HAP-1 (cell line): ENCODE measurements at regions of chr7 and their contacts with region 1.

Region 1: DNA sequence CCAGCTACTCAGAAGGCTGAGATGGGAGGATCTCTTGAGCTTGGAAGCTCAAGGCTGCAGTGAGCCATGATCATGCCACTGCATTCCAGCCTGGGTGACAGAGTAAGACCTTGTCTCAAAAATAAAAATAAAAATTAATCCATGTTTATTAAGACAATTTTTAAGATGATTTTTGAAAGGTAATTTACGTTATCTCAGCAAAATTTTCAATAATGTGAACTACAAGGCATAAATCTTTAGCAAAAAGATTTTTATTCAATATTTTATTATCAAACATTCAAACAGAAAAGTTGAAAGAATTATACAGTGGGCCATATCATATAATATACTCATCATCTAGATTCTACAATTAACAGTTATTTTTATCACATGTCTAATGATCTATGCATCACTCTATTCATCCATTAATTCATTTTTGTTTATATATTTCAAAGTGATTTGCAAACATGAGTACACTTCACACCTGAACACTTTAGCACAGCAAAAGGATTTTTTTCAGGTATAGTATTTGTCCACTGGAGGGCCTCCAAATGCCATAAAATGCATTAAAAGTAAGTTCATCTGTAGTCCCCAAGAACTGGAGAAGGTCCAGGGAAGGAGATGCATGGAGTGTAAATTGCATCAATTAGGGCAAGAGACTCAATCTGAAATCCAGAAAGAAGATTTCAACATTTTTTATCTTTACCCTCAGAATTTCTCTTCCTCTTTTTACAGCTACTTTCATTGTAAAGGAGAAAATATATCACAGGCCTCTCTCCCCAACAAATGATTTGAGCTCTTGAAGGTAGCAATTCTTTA is 38.6 kb upstream of the RSBN1L start:
- DNase-seq: peak; percentile 33 to 40
- H3K4me3 ChIP-seq: no peak overlapping the region
- H3K4me1 ChIP-seq: no peaks in the 10 kb centered on the region
- H3K27me3 ChIP-seq: no peaks in the 10 kb centered on the region

Region 2: DNA sequence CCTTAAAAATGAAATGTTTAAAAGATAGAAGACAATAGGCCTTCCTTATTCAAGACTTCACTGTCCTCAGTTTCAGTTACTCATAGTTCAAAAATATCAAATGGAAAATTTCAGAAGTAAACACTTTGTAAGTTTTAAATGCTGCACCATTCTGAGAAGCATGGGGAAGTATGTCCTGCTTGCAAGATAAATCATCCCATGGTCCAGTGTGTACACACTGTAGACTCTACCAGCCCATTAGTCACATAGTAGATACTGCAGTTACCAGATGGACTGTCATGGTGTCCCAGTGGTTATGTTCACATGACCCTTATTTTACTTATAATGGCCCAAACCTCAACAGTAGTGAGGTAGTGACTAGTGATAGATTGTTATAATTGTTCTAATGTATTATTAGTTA is 51.1 kb before region 1 on chr7:
- in situ Hi-C with region 1: no loop called
- DNase-seq: no peak
- H3K4me3 ChIP-seq: no peak overlapping the region
- H3K4me1 ChIP-seq: peaks cover 5% of the 10 kb centered on the region; the same call in 1 of the 2 replicates
- H3K27me3 ChIP-seq: no peaks in the 10 kb centered on the region

Region 3: GRCh38 chr7:77752021-77752420 is 94.4 kb after region 1 on chr7:
- in situ Hi-C with region 1: loop called (anchors 5 kb)
- DNase-seq: no peak
- H3K4me3 ChIP-seq: no peak overlapping the region
- H3K4me1 ChIP-seq: 0 out of 2 replicates have a peak, but pooled peaks cover 5% of the 10 kb centered on the region
- H3K27me3 ChIP-seq: no peaks in the 10 kb centered on the region

Region 4: DNA sequence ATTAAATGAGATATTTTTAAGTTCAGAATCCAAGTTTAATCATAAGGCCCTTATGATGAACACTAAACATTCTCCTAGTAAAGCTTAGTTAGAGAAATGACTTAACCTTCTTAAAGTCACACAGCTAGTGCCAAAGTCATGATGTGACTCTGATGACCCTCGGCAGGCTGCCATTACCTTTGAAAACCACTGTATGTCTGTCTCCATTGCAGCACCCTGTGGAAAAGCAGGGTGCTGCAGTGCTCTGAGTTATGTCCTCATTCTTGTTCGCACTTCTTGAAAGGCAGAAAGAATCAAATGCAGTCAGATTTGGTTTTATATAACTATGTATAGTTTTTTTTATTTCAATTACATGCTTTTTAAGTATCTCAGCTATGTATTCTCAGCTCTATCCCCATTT is 246.0 kb after region 1 on chr7:
- in situ Hi-C with region 1: loop called (anchors 25 kb)
- DNase-seq: no peak
- H3K4me3 ChIP-seq: no peak overlapping the region
- H3K4me1 ChIP-seq: no peaks in the 10 kb centered on the region
- H3K27me3 ChIP-seq: no peaks in the 10 kb centered on the region

Region 5: GRCh38 chr7:78296644-78297371 is 639.2 kb after region 1 on chr7:
- in situ Hi-C with region 1: no loop called
- DNase-seq: no peak
- H3K4me3 ChIP-seq: no peak overlapping the region
- H3K4me1 ChIP-seq: no peaks in the 10 kb centered on the region
- H3K27me3 ChIP-seq: no peaks in the 10 kb centered on the region

Region 6: DNA sequence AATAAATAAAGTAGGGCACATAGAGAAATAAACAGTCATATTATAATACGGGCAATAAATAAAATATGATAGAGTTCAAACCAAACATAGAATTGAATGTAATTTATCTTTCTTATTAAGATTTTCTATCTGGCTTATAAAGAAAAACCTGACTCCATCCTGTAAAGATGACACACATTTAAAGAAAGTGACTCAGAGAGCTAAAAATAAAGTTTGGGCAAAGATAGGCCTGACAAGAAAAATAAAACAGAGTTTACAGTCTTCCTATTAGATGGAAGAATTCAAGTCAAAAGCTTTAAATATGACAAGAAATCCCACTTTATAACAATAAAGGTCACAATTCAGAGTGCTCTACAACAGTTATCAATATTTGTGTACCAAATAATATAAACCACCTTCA is 721.5 kb after region 1 on chr7:
- in situ Hi-C with region 1: no loop called
- DNase-seq: no peak
- H3K4me3 ChIP-seq: no peak overlapping the region
- H3K4me1 ChIP-seq: no peaks in the 10 kb centered on the region
- H3K27me3 ChIP-seq: no peaks in the 10 kb centered on the region

Region 7: DNA sequence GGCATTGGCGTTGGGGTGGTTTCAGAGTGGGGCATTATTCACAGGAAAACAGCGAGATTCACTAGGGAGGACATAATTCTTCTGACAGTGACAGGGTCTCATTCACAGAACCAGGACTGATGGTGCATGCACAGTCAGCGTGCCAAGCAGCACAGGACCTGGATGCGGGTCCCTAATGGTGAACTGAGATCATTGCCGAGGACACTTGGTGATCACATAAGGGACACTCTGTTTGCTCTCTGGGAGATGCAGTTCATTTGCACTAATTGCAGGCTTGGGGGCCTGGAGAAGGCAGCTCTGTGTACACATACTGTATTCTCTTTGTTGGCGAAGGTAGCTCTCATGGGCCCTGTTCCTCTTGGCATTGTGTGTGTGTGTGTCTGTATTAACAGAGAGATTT is 857.0 kb after region 1 on chr7:
- in situ Hi-C with region 1: no loop called
- DNase-seq: no peak
- H3K4me3 ChIP-seq: no peak overlapping the region
- H3K4me1 ChIP-seq: no peaks in the 10 kb centered on the region
- H3K27me3 ChIP-seq: no peaks in the 10 kb centered on the region